Activated CD8-positive, alpha-beta T cell treated with anti-CD3 and anti-CD28 coated beads for 36 hours (primary cell): ENCODE measurements at regions of chr7 and their contacts with region 1.

Region 1: GRCh38 chr7:74401137-74401859 is 52.4 kb upstream of the GTF2IRD1 start:
- DNase-seq: peak; percentile 81
- ATAC-seq: peak; percentile 82
- H3K4me3 Mint-ChIP-seq: no peak overlapping the region
- H3K27ac Mint-ChIP-seq: no peak overlapping the region
- H3K4me1 Mint-ChIP-seq: no peaks in the 10 kb centered on the region
- H3K27me3 Mint-ChIP-seq: no peaks in the 10 kb centered on the region
- CTCF ChIP-seq: peak; percentile 93

Region 2: GRCh38 chr7:73851410-73852234 is 549.7 kb before region 1 on chr7:
- CTCF ChIA-PET with region 1: no interaction called
- POLR2A ChIA-PET with region 1: no interaction called
- intact Hi-C with region 1: no loop called
- DNase-seq: peak; percentile 62
- ATAC-seq: peak; percentile 93
- H3K4me3 Mint-ChIP-seq: no peak overlapping the region
- H3K27ac Mint-ChIP-seq: peak overlapping the region; percentile 25
- H3K4me1 Mint-ChIP-seq: peaks cover 23% of the 10 kb centered on the region
- H3K27me3 Mint-ChIP-seq: peaks cover 9% of the 10 kb centered on the region
- CTCF ChIP-seq: no peak

Region 3: DNA sequence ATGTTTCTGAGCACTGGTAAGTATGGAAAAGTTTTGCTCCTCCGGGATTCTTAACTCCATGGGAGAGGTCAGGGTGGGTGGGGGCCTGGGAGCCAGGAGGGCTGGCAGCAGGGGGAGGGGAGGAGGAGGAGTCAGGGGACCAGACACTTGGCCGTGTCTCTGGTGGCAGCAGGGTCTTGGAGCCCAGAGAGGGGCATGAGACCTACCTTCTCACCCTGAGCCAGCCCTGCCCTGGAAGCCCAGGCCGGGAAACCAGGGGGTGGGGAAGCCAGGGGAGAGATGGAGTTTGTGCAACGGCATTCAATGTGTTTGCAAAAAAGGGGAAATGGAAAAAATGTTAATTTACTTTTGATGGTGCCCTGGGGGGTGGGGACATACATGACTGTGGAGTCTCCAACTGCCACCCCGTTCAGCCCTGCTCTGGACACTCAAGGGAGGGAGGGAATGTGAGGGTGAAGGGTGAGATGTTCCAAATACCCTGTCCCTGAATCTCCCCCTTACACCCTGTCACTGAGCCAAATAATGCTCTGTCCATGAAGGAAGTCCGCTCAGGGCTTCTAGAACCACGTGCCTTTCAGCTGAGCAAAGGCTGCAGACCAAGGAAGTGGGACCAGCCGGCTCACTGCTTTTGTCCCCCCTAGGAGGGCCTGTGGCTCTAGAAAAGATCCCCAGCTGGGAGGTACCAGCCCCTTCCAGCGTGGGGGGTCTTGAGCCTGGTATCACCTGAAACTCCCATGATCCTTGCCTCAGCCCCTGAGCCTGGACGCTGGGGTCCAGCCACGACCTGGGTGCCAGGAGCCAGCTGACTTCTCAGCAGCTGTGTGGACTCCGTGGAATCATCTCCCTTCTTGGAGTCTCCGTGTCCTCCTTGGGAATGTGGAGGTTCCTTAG is 492.0 kb before region 1 on chr7:
- CTCF ChIA-PET with region 1: no interaction called
- POLR2A ChIA-PET with region 1: no interaction called
- intact Hi-C with region 1: no loop called
- DNase-seq: no peak
- ATAC-seq: no peak
- H3K4me3 Mint-ChIP-seq: no peak overlapping the region
- H3K27ac Mint-ChIP-seq: no peak overlapping the region
- H3K4me1 Mint-ChIP-seq: no peaks in the 10 kb centered on the region
- H3K27me3 Mint-ChIP-seq: peaks cover 2% of the 10 kb centered on the region
- CTCF ChIP-seq: no peak

Region 4: GRCh38 chr7:74173866-74174605 is 227.3 kb before region 1 on chr7 and contains the start of gene EIF4H:
- CTCF ChIA-PET with region 1: interaction called, 12 read pairs
- POLR2A ChIA-PET with region 1: interaction called, 6 read pairs
- intact Hi-C with region 1: no loop called
- DNase-seq: peak; percentile 96
- ATAC-seq: peak; percentile 87
- H3K4me3 Mint-ChIP-seq: peak within 1 kb of the TSS; percentile 81
- H3K27ac Mint-ChIP-seq: peak within 1 kb of the TSS; percentile 94
- H3K4me1 Mint-ChIP-seq: peaks cover 35% of the 10 kb centered on the region
- H3K27me3 Mint-ChIP-seq: no peaks in the 10 kb centered on the region
- CTCF ChIP-seq: no peak
- total RNA-seq, gene EIF4H: 461 to 464 TPM

Region 5: DNA sequence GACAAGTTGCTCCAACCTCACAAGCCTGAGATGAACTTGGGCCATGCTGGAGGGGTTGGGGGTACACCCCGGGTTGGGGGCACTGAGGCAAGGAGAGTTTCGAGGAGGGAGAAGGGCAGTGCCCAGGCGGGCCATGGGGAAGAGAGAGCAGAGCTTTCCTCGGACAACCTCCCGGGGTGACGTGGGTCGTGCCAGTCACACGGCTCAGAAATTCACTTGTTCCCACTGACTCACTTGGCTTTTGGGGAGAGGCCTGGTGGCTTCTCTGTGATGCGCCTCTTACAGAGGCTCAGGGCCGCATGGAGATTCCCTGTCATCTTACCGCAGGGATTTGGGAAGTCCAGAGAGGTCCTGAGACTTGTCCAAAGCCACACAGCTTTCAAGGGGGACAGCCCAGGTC is 188.6 kb before region 1 on chr7:
- CTCF ChIA-PET with region 1: interaction called, 197 read pairs
- POLR2A ChIA-PET with region 1: no interaction called
- intact Hi-C with region 1: loop called (anchors 2 kb)
- DNase-seq: no peak
- ATAC-seq: no peak
- H3K4me3 Mint-ChIP-seq: no peak overlapping the region
- H3K27ac Mint-ChIP-seq: no peak overlapping the region
- H3K4me1 Mint-ChIP-seq: peaks cover 14% of the 10 kb centered on the region
- H3K27me3 Mint-ChIP-seq: peaks cover 5% of the 10 kb centered on the region
- CTCF ChIP-seq: no peak

Region 6: GRCh38 chr7:74272305-74273038 is 128.8 kb before region 1 on chr7:
- CTCF ChIA-PET with region 1: interaction called, 19 read pairs
- POLR2A ChIA-PET with region 1: no interaction called
- intact Hi-C with region 1: no loop called
- DNase-seq: peak; percentile 58
- ATAC-seq: peak; percentile 21
- H3K4me3 Mint-ChIP-seq: no peak overlapping the region
- H3K27ac Mint-ChIP-seq: peak overlapping the region; percentile 57
- H3K4me1 Mint-ChIP-seq: peaks cover 11% of the 10 kb centered on the region
- H3K27me3 Mint-ChIP-seq: peaks cover 6% of the 10 kb centered on the region
- CTCF ChIP-seq: no peak

Region 7: GRCh38 chr7:74379938-74380337 is 21.4 kb before region 1 on chr7:
- CTCF ChIA-PET with region 1: interaction called, 15 read pairs
- POLR2A ChIA-PET with region 1: no interaction called
- intact Hi-C with region 1: no loop called
- DNase-seq: no peak
- ATAC-seq: no peak
- H3K4me3 Mint-ChIP-seq: no peak overlapping the region
- H3K27ac Mint-ChIP-seq: no peak overlapping the region
- H3K4me1 Mint-ChIP-seq: no peaks in the 10 kb centered on the region
- H3K27me3 Mint-ChIP-seq: no peaks in the 10 kb centered on the region
- CTCF ChIP-seq: no peak

Region 8: GRCh38 chr7:74412056-74412455 is 10.8 kb after region 1 on chr7:
- CTCF ChIA-PET with region 1: interaction called, 30 read pairs
- POLR2A ChIA-PET with region 1: no interaction called
- intact Hi-C with region 1: no loop called
- DNase-seq: no peak
- ATAC-seq: no peak
- H3K4me3 Mint-ChIP-seq: no peak overlapping the region
- H3K27ac Mint-ChIP-seq: no peak overlapping the region
- H3K4me1 Mint-ChIP-seq: no peaks in the 10 kb centered on the region
- H3K27me3 Mint-ChIP-seq: peaks cover 1% of the 10 kb centered on the region
- CTCF ChIP-seq: no peak

Region 9: GRCh38 chr7:74569501-74570075 is 168.3 kb after region 1 on chr7:
- CTCF ChIA-PET with region 1: interaction called, 19 read pairs
- POLR2A ChIA-PET with region 1: no interaction called
- intact Hi-C with region 1: no loop called
- DNase-seq: peak; percentile 2
- ATAC-seq: peak; percentile 24
- H3K4me3 Mint-ChIP-seq: no peak overlapping the region
- H3K27ac Mint-ChIP-seq: peak overlapping the region; percentile 28
- H3K4me1 Mint-ChIP-seq: peaks cover 3% of the 10 kb centered on the region
- H3K27me3 Mint-ChIP-seq: peaks cover 3% of the 10 kb centered on the region
- CTCF ChIP-seq: no peak